Tibial artery (tissue), 4 donors: ENCODE measurements at regions of chr14 and their contacts with region 1.

Region 1: GRCh38 chr14:93655078-93655750 is 133.1 kb downstream of the PRIMA1 start:
- DNase-seq: no peak
- H3K4me3 ChIP-seq: no peak overlapping the region
- H3K27ac ChIP-seq: no peak overlapping the region
- H3K4me1 ChIP-seq: no peaks in the 10 kb centered on the region
- H3K27me3 ChIP-seq: peaks cover 0 to 9% of the 10 kb centered on the region in 2 donors
- CTCF ChIP-seq: peak; percentile 59 to 72

Region 2: DNA sequence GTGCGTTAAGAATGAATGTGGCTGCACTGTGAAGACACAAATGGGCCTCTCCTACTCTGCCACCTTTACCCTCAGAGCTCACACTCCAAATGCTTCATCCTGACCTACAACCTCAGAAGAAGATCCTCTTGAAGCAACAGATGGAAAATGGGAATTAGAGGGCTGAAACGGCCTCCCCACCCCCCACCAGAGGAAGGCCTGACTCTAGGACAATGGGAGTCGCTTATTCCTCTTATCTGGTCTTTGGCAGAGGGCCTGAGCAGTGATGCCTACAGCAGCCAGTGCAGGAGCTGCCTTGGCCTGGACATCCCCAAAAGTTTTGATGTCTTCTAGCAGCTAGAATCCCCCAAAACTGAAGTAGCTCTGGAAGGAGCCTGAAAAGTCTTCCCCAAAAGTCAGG is 351.6 kb before region 1 on chr14:
- intact Hi-C with region 1: no loop called
- DNase-seq: no peak
- H3K4me3 ChIP-seq: no peak overlapping the region
- H3K27ac ChIP-seq: no peak overlapping the region
- H3K4me1 ChIP-seq: peaks cover 0 to 57% (median 2%) of the 10 kb centered on the region in 4 donors
- H3K27me3 ChIP-seq: no peaks in the 10 kb centered on the region
- CTCF ChIP-seq: no peak

Region 3: GRCh38 chr14:93752635-93753561 is 97.7 kb after region 1 on chr14:
- intact Hi-C with region 1: no loop called
- DNase-seq: peak; percentile 31 to 81
- H3K4me3 ChIP-seq: no peak overlapping the region
- H3K27ac ChIP-seq: no peak overlapping the region
- H3K4me1 ChIP-seq: peaks cover 0 to 19% (median 12%) of the 10 kb centered on the region in 4 donors
- H3K27me3 ChIP-seq: no peaks in the 10 kb centered on the region
- CTCF ChIP-seq: no peak

Region 4: GRCh38 chr14:93788543-93789227 is 133.5 kb after region 1 on chr14:
- intact Hi-C with region 1: loop called (anchors 5 kb)
- DNase-seq: peak; percentile 37 to 85
- H3K4me3 ChIP-seq: peak overlapping the region; percentile 58 to 69
- H3K27ac ChIP-seq: peak overlapping the region; percentile 80 to 82
- H3K4me1 ChIP-seq: peaks cover 5 to 27% (median 27%) of the 10 kb centered on the region in 4 donors
- H3K27me3 ChIP-seq: no peaks in the 10 kb centered on the region
- CTCF ChIP-seq: peak; percentile 26 to 62

Region 5: DNA sequence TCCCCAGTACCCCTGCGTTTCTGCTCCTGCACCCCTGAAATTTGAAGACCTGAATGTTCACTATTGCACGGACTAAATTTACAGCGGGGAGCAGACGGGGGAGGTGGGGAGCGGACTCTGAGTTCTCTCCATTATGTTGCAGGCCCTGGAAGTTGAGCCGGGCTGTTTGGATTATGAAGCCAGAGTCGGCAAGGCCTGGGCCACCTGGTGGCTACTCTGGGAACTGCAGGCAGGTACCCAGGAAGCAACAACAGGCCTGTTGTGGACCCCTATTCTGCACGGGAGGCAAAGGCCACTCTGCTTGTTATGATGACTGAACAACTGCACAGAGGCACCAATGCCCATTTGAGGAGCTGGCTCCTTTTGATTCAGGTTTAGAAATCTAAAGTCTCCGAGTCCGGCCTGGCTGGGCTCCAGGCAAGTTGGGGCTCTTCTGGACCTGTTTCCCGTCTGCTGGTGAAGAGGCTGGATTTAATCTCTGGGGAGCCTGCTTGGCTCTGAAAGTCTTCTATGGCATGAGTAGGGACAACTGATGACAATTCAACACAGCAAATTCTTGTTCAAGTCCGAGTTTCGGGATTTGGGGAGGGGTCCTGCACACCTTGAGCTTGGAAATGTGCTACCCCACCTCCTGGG is 237.8 kb after region 1 on chr14:
- intact Hi-C with region 1: loop called (anchors 5 kb)
- DNase-seq: peak; percentile 75 to 82
- H3K4me3 ChIP-seq: peak overlapping the region in 1 of 2 donors; percentile 25
- H3K27ac ChIP-seq: peak overlapping the region in 1 of 2 donors; percentile 3
- H3K4me1 ChIP-seq: peaks cover 0 to 19% (median 12%) of the 10 kb centered on the region in 4 donors
- H3K27me3 ChIP-seq: no peaks in the 10 kb centered on the region
- CTCF ChIP-seq: peak; percentile 94 to 99

Region 6: DNA sequence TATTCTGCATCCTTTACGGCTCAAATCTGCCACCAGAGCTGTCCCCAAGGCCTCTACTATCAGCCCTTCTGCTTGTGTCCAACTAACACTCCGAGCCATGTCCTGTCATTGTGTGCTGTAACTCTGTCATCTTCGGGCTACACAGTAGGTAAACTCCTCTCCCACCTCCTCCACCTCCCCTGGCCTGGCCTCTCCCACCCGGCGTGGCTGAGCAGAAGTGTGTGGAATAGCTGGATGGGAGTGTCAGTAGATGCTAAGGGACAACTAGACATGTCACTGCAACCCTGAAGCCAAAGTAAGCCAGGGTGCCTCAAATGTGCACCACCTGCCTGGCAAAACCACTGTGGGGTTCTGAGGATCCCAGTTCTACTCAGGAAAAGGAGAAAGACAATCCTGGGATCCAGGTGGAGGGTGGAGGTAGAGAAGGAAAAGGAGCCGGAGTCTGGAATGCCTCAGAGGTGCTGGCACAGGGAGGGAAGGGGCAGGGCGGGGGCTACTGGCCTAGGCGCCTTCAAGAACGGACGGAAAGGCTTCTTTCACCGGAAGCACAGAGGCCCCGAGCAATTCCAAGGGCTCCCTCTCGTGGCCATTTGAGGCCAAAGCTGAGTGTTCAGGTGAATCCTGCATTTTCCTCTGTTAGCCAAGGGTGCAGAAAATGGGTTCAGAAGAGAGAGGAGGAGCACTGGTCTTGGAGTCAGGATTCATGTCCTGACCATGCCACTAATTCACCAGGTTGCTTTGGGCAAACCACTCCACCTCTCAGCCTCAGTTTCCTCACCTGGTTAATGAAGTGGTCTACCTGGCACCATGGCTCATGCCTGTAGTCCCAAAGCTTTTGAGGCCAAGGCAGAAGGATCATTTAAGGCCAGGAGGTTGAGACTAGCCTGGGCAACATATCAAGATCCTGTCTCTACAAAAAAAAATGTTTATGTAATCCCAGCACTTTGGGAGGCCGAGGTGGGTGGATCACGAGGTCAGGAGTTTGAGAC is 251.4 kb after region 1 on chr14:
- intact Hi-C with region 1: loop called (anchors 5 kb)
- DNase-seq: peak in 1 of 2 donors; percentile 74
- H3K4me3 ChIP-seq: no peak overlapping the region
- H3K27ac ChIP-seq: no peak overlapping the region
- H3K4me1 ChIP-seq: no peaks in the 10 kb centered on the region
- H3K27me3 ChIP-seq: peaks cover 0 to 20% of the 10 kb centered on the region in 2 donors
- CTCF ChIP-seq: peak; percentile 58 to 65

Region 7: GRCh38 chr14:94001501-94002396 is 346.5 kb after region 1 on chr14:
- intact Hi-C with region 1: loop called (anchors 10 kb)
- DNase-seq: peak in 1 of 2 donors; percentile 41
- H3K4me3 ChIP-seq: no peak overlapping the region
- H3K27ac ChIP-seq: no peak overlapping the region
- H3K4me1 ChIP-seq: peaks cover 0 to 12% (median 2%) of the 10 kb centered on the region in 4 donors
- H3K27me3 ChIP-seq: no peaks in the 10 kb centered on the region
- CTCF ChIP-seq: peak; percentile 95 to 96